Heart left ventricle (tissue), 16 donors: ENCODE measurements at regions of chr20 and their contacts with region 1.

Region 1: GRCh38 chr20:34129518-34130162 is 17.6 kb upstream of the EIF2S2 start:
- DNase-seq: peak in 4 of 5 donors; percentile 41 to 57 (median 48)
- ATAC-seq: peak; percentile 47 to 88 (median 80)
- H3K4me3 ChIP-seq: no peak overlapping the region
- H3K27ac ChIP-seq: no peak overlapping the region
- H3K4me1 ChIP-seq: peaks cover 0 to 4% (median 0%) of the 10 kb centered on the region in 12 donors
- H3K27me3 ChIP-seq: no peaks in the 10 kb centered on the region
- CTCF ChIP-seq: peak; percentile 76 to 91 (median 86)
- POLR2A ChIP-seq: no peak

Region 2: DNA sequence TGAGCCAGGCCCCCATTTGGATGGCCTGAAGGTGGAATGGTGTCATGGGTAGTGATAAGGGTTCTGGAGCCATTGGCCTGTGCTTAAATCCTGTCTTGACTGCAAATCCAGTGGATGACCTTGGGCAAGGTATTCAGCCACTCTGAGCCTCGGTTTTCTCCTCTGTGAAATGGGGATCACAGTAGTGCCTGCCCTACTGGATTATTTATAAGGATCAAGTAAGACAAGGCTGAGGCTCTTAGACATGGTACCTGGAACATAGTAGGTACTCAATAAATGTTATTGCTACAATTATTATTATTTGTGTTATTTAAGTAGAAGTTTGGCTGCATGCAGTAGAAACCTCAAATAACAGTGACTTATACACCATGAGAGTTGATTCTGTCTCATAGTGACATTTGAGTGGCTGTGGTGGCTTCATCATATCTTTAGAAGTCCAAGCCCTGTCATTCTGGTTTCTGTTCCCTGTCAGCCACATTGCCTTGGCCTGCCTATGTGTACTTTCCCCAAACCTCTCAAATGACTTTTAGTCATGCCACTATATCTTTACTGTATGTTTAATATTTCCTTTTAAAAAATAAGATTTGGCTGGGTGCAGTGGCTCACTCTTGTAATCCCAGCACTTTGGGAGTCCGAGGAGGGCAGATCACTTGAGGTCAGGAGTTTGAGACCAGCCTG is 356.1 kb before region 1 on chr20:
- intact Hi-C with region 1: loop called in 2 of 10 experiments (anchors 10 kb)
- DNase-seq: no peak
- ATAC-seq: peak in 2 of 4 donors; percentile 58 to 59
- H3K4me3 ChIP-seq: no peak overlapping the region
- H3K27ac ChIP-seq: no peak overlapping the region
- H3K4me1 ChIP-seq: no peaks in the 10 kb centered on the region
- H3K27me3 ChIP-seq: no peaks in the 10 kb centered on the region
- CTCF ChIP-seq: no peak
- POLR2A ChIP-seq: no peak

Region 3: DNA sequence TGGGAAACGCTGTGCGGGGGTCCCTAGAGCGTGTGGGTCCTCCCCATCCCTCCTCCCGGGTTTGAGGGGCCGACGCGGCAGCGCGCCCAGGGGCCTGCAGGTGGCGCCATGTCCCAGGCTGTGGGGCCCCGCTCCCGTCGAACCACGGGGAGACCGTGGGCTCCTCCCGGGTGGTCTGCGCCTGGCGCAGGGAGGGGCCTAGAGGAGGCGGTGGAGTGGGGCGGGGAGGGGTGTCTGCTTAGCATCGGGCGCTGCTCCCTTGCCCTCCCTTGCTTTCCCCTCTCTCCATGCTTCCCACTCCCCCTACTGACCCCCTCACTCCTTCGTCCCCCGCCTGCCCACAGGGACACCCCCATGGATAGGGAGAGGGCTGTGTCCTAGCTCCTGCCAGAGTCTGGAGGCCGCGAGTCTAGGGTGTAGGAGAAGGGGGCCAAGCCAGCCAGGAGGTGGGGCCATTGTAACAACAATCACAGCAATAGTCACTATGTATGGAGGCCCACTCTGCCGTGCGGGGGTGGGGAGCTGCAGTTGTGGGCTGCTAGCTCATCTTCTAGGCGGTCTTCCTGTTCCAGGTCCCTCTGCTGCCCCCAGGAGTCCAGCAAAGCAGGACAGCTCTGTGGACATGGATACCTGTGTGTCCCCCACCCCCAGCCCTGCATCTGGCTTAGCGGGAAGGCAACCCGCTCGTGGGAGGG is 266.8 kb before region 1 on chr20:
- intact Hi-C with region 1: loop called (anchors 2 to 5 kb)
- DNase-seq: peak in 4 of 5 donors; percentile 33 to 53 (median 40)
- ATAC-seq: peak; percentile 55 to 83 (median 78)
- H3K4me3 ChIP-seq: peak overlapping the region in 5 of 12 donors; percentile 15 to 36 (median 16)
- H3K27ac ChIP-seq: no peak overlapping the region
- H3K4me1 ChIP-seq: peaks cover 0 to 25% (median 14%) of the 10 kb centered on the region in 12 donors
- H3K27me3 ChIP-seq: no peaks in the 10 kb centered on the region
- CTCF ChIP-seq: peak; percentile 49 to 76 (median 65)
- POLR2A ChIP-seq: no peak

Region 4: GRCh38 chr20:33984182-33984719 is 145.4 kb before region 1 on chr20:
- intact Hi-C with region 1: no loop called
- DNase-seq: no peak
- ATAC-seq: no peak
- H3K4me3 ChIP-seq: no peak overlapping the region
- H3K27ac ChIP-seq: no peak overlapping the region
- H3K4me1 ChIP-seq: no peaks in the 10 kb centered on the region
- H3K27me3 ChIP-seq: no peaks in the 10 kb centered on the region
- CTCF ChIP-seq: no peak
- POLR2A ChIP-seq: no peak

Region 5: DNA sequence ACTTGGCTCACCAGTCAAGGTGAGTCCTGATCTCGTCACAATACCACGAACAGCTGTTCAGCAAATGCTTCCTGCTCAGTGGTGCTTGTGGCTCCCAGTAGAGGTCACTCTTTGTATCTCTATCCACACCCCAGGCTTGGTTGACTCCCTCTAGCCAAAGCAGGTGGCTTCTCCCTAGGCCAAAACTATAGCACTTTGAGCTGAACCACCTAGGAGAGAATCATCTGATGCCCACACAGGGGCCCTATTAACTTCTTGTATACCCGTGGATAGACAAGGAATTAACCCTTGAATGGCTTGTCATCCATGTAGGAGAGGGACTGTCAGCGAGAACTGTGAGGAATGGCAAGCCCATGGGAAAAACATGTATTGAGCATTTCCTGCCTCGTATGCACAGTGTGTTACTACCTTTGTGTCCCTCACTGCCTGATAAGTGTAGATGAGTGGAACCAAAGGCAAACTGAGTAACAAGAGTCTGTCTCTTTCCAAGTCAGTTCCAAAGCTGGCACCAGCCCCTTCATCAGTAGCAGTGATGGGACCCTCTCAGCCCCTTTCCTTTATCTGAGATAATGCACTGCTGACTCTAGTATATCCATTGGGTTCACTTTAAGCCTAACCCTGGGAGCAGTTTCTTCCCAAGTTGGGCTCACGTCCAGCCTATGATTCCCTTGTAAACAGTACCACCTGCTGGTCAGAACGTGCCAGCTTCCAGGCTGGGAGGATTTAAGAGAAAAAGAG is 60.1 kb before region 1 on chr20:
- intact Hi-C with region 1: loop called in 2 of 10 experiments (anchors 2 to 10 kb)
- DNase-seq: peak; percentile 50 to 74 (median 71)
- ATAC-seq: peak; percentile 72 to 91 (median 86)
- H3K4me3 ChIP-seq: no peak overlapping the region
- H3K27ac ChIP-seq: peak overlapping the region in 1 of 12 donors; percentile 7
- H3K4me1 ChIP-seq: peaks cover 0 to 50% (median 28%) of the 10 kb centered on the region in 12 donors
- H3K27me3 ChIP-seq: no peaks in the 10 kb centered on the region
- CTCF ChIP-seq: peak; percentile 75 to 93 (median 87)
- POLR2A ChIP-seq: no peak

Region 6: DNA sequence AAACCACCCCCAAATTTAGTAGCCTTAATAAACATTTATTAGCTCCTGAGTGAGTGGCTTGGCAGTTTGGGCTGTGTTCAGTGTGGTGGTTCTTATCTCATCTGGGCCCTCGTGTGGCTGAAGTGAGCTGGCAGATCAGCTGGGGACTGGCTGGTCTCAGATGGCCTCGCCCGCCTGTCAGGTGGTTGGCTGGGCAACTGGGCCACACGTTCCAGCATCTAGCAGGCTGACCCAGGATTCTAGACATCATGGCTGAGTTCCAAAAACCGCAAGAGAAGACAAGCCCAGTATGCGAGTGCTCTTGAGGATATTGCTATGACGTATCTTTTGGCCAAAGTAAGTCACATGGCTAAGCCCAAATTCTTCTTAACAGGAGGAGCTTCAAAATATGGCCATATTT is 46.5 kb before region 1 on chr20:
- intact Hi-C with region 1: loop called in 4 of 10 experiments (anchors 5 to 10 kb)
- DNase-seq: peak; percentile 81 to 90 (median 85)
- ATAC-seq: peak; percentile 92 to 96 (median 94)
- H3K4me3 ChIP-seq: no peak overlapping the region
- H3K27ac ChIP-seq: peak overlapping the region in 10 of 12 donors; percentile 5 to 72 (median 54)
- H3K4me1 ChIP-seq: peaks cover 0 to 37% (median 21%) of the 10 kb centered on the region in 12 donors
- H3K27me3 ChIP-seq: no peaks in the 10 kb centered on the region
- CTCF ChIP-seq: peak in 3 of 12 donors; percentile 11 to 31 (median 17)
- POLR2A ChIP-seq: no peak

Region 7: DNA sequence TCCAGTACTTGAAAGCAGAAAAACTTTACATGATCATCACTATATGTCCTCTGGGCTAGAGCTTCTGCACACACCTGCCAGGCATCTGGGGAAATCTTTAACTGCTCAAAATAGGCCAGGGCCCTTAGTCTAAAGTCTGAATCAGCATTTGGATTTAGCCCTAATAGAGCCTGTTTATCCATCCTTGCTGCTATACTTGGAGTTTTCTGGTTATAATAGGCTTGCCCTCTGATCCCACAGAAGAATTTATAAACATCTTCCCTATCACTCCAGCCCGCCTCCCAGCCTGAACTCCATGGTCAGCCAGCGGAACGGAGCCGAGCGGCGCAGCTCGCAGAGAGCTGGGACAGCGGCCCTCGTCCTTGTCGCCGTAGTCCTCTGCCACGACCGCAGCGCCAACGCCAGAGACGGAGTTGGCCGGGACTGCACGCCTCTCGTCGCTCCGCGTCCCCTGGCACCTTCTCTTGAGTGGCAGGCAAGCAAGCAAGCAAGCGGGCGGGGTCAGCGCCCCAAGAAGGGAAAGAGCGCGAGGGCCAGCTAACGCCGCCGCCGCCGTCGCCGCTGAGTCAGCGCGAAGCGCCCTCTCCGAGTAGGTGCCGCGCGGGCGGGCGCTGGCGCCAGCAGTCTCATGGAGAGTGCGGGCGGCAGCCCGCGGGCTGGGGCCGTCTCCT is 86.2 kb after region 1 on chr20:
- intact Hi-C with region 1: no loop called
- DNase-seq: peak; percentile 79 to 94 (median 91)
- ATAC-seq: peak; percentile 95 to 99 (median 99)
- H3K4me3 ChIP-seq: peak overlapping the region in 11 of 12 donors; percentile 10 to 66 (median 49)
- H3K27ac ChIP-seq: peak overlapping the region; percentile 19 to 84 (median 76)
- H3K4me1 ChIP-seq: peaks cover 0 to 15% (median 2%) of the 10 kb centered on the region in 12 donors
- H3K27me3 ChIP-seq: no peaks in the 10 kb centered on the region
- CTCF ChIP-seq: peak in 2 of 12 donors; percentile 12 to 20
- POLR2A ChIP-seq: no peak